ENCODE measurements at regions of chr17 and their contacts with region 1.

Region 1: GRCh38 chr17:75238684-75239191 is 22.7 kb downstream of the GGA3 start:
- DNase-seq: peak; percentile 69 to 80 (median 76)
- ATAC-seq: peak; percentile 81
- H3K4me3 ChIP-seq: no peak overlapping the region
- H3K27ac ChIP-seq: no peak overlapping the region
- H3K4me1 ChIP-seq: peaks cover 14 to 33% of the 10 kb centered on the region in 2 experiments
- H3K27me3 ChIP-seq: no peaks in the 10 kb centered on the region
- CTCF ChIP-seq: peak; percentile 88 to 94 (median 88)
- EP300 ChIP-seq: no peak
- POLR2A ChIP-seq: peak; percentile 58
- RAD21 ChIP-seq: peak; percentile 41 to 78

Region 2: DNA sequence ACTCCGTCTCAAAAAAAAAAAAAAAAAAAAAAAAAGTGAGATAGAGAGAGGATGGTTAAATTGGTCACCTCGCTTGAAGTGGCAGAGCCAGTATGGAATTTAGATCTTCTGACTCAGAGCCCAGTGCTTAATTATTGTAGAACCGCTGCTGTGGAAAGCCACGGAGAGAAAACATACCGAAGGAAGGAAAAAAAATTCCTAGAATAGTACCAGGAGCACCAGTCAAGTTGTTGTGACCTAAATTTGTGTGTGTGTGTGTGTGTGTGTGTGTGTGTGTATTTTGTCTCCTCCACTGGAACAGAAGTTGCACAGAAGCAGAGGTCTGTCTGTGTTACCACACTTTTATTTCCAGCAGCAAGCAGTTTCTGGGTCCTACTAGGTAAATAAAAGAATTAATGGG is 43.9 kb before region 1 on chr17:
- CTCF ChIA-PET with region 1: no interaction called
- POLR2A ChIA-PET with region 1: no interaction called
- in situ Hi-C with region 1: no loop called
- intact Hi-C with region 1: no loop called
- DNase-seq: no peak
- ATAC-seq: no peak
- H3K4me3 ChIP-seq: no peak overlapping the region
- H3K27ac ChIP-seq: no peak overlapping the region
- H3K4me1 ChIP-seq: peaks cover 2 to 4% of the 10 kb centered on the region in 2 experiments; a peak in 1 of 5 replicates
- H3K27me3 ChIP-seq: no peaks in the 10 kb centered on the region
- CTCF ChIP-seq: no peak
- EP300 ChIP-seq: no peak
- POLR2A ChIP-seq: no peak
- RAD21 ChIP-seq: no peak

Region 3: GRCh38 chr17:75205037-75205792 is 33.5 kb before region 1 on chr17 and contains the start of gene NUP85:
- CTCF ChIA-PET with region 1: no interaction called
- POLR2A ChIA-PET with region 1: interaction called, 16 read pairs
- in situ Hi-C with region 1: no loop called
- intact Hi-C with region 1: no loop called
- DNase-seq: peak; percentile 96 to 100 (median 98)
- ATAC-seq: peak; percentile 87
- H3K4me3 ChIP-seq: peak within 1 kb of the TSS; percentile 67
- H3K27ac ChIP-seq: peak within 1 kb of the TSS; percentile 99
- H3K4me1 ChIP-seq: peaks cover 0 to 12% of the 10 kb centered on the region in 2 experiments; a peak in 3 of 5 replicates
- H3K27me3 ChIP-seq: no peaks in the 10 kb centered on the region
- CTCF ChIP-seq: no peak
- EP300 ChIP-seq: no peak; the same call in 1 of the 2 replicates
- POLR2A ChIP-seq: peak; percentile 94
- RAD21 ChIP-seq: peak in 1 of 2 experiments; percentile 21; a peak in 3 of 4 replicates
- polyA plus RNA-seq, gene NUP85: 156 to 177 TPM

Region 4: DNA sequence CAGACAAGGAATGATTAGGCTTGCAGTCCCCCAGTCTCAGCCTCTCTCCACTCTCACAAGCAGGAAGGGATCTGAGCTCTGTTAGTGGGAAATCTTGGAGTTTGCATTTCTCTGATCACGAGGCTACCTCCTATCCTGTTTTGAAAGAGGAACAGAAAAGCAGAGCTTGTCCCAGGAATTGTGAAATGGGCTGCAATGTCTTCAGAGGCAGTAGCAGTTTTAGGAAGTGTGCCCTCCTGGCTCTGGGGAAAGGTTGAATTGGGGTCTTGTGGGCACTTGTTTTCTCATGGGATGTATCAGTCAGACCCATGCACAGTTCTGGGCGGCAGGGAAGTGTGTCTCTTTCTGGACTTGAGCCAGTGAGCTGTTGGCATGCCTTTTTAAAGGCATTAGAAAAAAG is 10.4 kb before region 1 on chr17:
- CTCF ChIA-PET with region 1: no interaction called
- POLR2A ChIA-PET with region 1: interaction called, 38 read pairs
- in situ Hi-C with region 1: no loop called
- intact Hi-C with region 1: no loop called
- DNase-seq: no peak
- ATAC-seq: no peak
- H3K4me3 ChIP-seq: no peak overlapping the region
- H3K27ac ChIP-seq: no peak overlapping the region
- H3K4me1 ChIP-seq: no peaks in the 10 kb centered on the region
- H3K27me3 ChIP-seq: no peaks in the 10 kb centered on the region
- CTCF ChIP-seq: no peak
- EP300 ChIP-seq: no peak
- POLR2A ChIP-seq: no peak
- RAD21 ChIP-seq: no peak

Region 5: DNA sequence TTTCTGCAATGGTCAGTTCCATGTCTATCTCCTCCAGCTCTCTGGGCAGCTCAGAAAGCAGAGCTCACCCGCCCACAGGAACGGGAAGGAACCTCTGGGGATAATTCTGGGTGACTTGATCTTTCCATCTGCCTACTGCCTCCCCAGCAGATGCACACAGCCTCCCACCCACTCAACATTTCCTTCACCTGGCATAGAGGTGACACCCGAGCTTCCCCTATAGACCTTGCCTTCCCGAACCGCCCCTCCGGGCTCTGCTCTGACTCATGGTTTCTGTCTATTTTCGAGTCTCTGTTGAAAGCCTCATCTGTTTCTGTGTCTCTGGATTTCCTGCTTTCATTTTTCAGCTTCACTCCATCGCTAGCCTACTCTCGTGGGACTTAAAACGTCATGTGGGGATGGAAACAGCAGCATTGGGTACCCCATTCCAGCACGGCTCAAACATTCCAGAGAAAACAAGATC is 11.3 kb after region 1 on chr17:
- CTCF ChIA-PET with region 1: no interaction called
- POLR2A ChIA-PET with region 1: interaction called, 15 read pairs
- in situ Hi-C with region 1: no loop called
- intact Hi-C with region 1: no loop called
- DNase-seq: peak in 1 of 4 experiments; percentile 23
- ATAC-seq: peak; percentile 45; the same call in 2 of the 3 replicates
- H3K4me3 ChIP-seq: no peak overlapping the region
- H3K27ac ChIP-seq: no peak overlapping the region
- H3K4me1 ChIP-seq: peaks cover 5 to 22% of the 10 kb centered on the region in 2 experiments; a peak in 4 of 5 replicates
- H3K27me3 ChIP-seq: no peaks in the 10 kb centered on the region
- CTCF ChIP-seq: no peak
- EP300 ChIP-seq: no peak
- POLR2A ChIP-seq: no peak
- RAD21 ChIP-seq: no peak

Region 6: DNA sequence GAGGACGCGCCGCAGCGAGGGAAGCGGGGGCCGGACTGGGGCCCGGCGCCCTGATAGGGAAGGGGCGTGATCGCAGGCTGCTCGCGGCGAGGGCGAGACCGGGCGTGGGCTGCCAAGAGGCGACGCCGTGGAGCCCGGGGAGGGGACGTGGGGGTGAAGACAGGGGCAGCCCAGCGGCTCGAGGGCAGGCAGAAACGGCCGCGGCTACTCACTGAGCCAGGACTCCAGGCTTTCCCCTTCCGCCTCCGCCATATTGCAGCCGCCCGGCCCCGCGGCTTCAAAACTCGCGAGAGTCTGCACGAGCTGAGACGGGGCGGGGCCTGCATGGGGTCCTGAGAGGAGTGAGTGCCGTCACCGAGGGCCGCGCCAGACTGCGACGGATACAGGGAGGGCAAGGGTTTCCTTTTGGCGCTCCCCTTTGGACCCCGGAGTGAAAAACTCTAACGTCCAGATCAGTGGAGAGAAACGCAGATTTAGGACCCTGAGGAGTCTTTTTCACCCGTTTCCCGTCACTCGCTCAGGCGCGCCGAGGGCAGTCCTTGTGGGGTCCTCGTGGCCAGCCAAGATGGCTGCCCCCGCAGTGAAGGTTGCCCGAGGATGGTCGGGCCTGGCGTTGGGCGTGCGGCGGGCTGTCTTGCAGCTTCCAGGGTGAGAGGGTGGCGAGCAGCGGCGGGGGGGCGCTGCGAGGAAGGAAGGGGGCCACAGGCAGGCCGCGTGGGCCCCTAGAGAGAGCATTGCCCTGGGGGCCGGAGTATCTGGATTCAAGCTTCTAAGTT is 22.8 kb after region 1 on chr17 and contains the starts of genes GGA3 and MRPS7:
- CTCF ChIA-PET with region 1: interaction called, 4 read pairs
- POLR2A ChIA-PET with region 1: interaction called, 21 read pairs
- in situ Hi-C with region 1: no loop called
- intact Hi-C with region 1: loop called (anchors 2 kb)
- DNase-seq: peak; percentile 86 to 97 (median 94)
- ATAC-seq: peak; percentile 96
- H3K4me3 ChIP-seq: peak within 1 kb of the TSS; percentile 91
- H3K27ac ChIP-seq: peak within 1 kb of the TSS; percentile 93
- H3K4me1 ChIP-seq: peaks cover 20 to 23% of the 10 kb centered on the region in 2 experiments; a peak in 4 of 5 replicates
- H3K27me3 ChIP-seq: no peaks in the 10 kb centered on the region
- CTCF ChIP-seq: peak in 1 of 3 experiments; percentile 14; a peak in 2 of 6 replicates
- EP300 ChIP-seq: no peak
- POLR2A ChIP-seq: peak; percentile 95
- RAD21 ChIP-seq: 0 out of 4 replicates have a peak, but pooled peaks have one; percentile 2 to 16
- polyA plus RNA-seq, gene GGA3: 5.7 to 6.3 TPM
- polyA plus RNA-seq, gene MRPS7: 236 to 244 TPM

Region 7: DNA sequence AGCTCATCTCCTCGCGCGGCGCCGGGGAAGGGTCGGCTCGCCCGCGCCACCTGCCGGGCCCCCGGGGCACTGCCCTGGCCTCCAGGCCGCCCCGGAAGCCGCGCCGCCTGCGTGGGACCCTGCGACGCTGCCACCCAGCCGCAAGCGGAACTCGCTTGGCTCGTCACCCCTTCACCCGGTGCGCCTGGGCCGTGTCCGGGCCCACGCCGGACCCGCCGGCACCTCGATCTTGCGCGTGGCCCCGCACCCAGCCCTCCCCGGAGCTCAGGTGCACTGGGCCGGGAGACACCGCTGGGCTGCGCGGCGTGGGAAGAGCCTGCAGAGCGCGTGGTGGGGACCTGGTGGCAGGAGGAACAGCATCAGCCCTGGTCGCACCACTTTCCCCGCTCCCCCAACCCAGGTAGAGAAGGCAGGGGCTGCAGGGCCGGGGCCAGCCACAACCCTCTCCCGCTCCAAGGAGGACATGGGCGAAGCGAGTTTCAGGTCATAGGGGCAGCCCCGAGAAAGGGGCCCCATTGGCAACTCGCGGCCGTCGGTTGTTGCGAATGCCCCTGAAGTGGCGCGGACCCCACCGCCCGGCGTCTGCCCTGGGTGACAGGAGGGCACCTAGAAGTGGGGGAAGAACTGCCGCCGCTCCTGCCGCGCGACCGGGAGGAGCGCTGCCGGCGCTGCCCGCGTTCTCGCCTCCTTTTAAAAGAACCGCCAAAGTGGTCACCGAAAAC is 32.7 kb after region 1 on chr17:
- CTCF ChIA-PET with region 1: interaction called, 13 read pairs
- POLR2A ChIA-PET with region 1: interaction called, 10 read pairs
- in situ Hi-C with region 1: no loop called
- intact Hi-C with region 1: no loop called
- DNase-seq: peak; percentile 89 to 96 (median 92)
- ATAC-seq: peak; percentile 71
- H3K4me3 ChIP-seq: peak overlapping the region; percentile 97
- H3K27ac ChIP-seq: peak overlapping the region; percentile 93
- H3K4me1 ChIP-seq: peaks cover 30 to 59% of the 10 kb centered on the region in 2 experiments; a peak in 4 of 5 replicates
- H3K27me3 ChIP-seq: no peaks in the 10 kb centered on the region
- CTCF ChIP-seq: peak; percentile 60 to 91 (median 83)
- EP300 ChIP-seq: no peak
- POLR2A ChIP-seq: peak; percentile 73; the same call in 1 of the 2 replicates
- RAD21 ChIP-seq: peak; percentile 13 to 64; a peak in 2 of 4 replicates

Region 8: GRCh38 chr17:75412455-75413317 is 173.9 kb after region 1 on chr17:
- CTCF ChIA-PET with region 1: interaction called, 20 read pairs
- POLR2A ChIA-PET with region 1: interaction called, 3 read pairs
- in situ Hi-C with region 1: no loop called
- intact Hi-C with region 1: no loop called
- DNase-seq: peak; percentile 69 to 84 (median 72)
- ATAC-seq: peak; percentile 92
- H3K4me3 ChIP-seq: no peak overlapping the region
- H3K27ac ChIP-seq: no peak overlapping the region
- H3K4me1 ChIP-seq: no peaks in the 10 kb centered on the region
- H3K27me3 ChIP-seq: peaks cover 0 to 9% of the 10 kb centered on the region in 2 experiments; a peak in 2 of 5 replicates
- CTCF ChIP-seq: peak; percentile 88 to 92 (median 91)
- EP300 ChIP-seq: no peak
- POLR2A ChIP-seq: no peak
- RAD21 ChIP-seq: peak; percentile 94 to 98

Measured in K562 (cell line).